ENCODE measurements at regions of chr5 and their contacts with region 1.

Region 1: GRCh38 chr5:68287976-68288706 is 72.6 kb downstream of the PIK3R1 start:
- DNase-seq: peak; percentile 19 to 81 (median 34)
- ATAC-seq: peak; percentile 73
- H3K4me3 ChIP-seq: peak overlapping the region; percentile 65
- H3K4me3 Mint-ChIP-seq: peak overlapping the region; percentile 94
- H3K27ac ChIP-seq: peak overlapping the region; percentile 45 to 52
- H3K27ac Mint-ChIP-seq: peak overlapping the region; percentile 91
- H3K4me1 ChIP-seq: peaks cover 46% of the 10 kb centered on the region
- H3K4me1 Mint-ChIP-seq: peaks cover 93% of the 10 kb centered on the region
- H3K27me3 ChIP-seq: no peaks in the 10 kb centered on the region
- H3K27me3 Mint-ChIP-seq: no peaks in the 10 kb centered on the region
- CTCF ChIP-seq: no peak

Region 2: DNA sequence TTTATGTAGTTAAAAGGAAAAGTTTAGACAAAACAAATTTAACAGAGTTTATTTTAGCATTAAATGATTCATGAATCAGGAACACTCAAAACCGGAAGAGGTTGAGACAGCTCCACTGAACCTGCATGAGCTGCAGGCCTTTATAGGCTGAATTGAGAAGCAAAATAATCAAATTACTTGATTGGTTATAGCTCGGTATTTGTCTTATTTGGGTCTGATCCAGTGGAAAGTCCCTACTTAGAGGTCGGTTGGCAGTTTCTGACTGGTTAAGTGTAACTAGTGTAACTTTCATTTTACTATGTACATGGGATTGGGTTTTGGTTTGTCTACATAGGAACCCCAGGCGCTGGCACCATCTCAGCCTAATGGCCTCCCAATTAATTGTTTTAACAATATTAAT is 146.6 kb before region 1 on chr5:
- CTCF ChIA-PET with region 1: no interaction called
- POLR2A ChIA-PET with region 1: no interaction called
- intact Hi-C with region 1: no loop called
- DNase-seq: peak in 3 of 14 experiments; percentile 44 to 64 (median 46)
- ATAC-seq: peak; percentile 61
- H3K4me3 ChIP-seq: no peak overlapping the region
- H3K4me3 Mint-ChIP-seq: no peak overlapping the region
- H3K27ac ChIP-seq: no peak overlapping the region
- H3K27ac Mint-ChIP-seq: no peak overlapping the region
- H3K4me1 ChIP-seq: no peaks in the 10 kb centered on the region
- H3K4me1 Mint-ChIP-seq: peaks cover 4% of the 10 kb centered on the region
- H3K27me3 ChIP-seq: no peaks in the 10 kb centered on the region
- H3K27me3 Mint-ChIP-seq: peaks cover 4% of the 10 kb centered on the region
- CTCF ChIP-seq: no peak

Region 3: DNA sequence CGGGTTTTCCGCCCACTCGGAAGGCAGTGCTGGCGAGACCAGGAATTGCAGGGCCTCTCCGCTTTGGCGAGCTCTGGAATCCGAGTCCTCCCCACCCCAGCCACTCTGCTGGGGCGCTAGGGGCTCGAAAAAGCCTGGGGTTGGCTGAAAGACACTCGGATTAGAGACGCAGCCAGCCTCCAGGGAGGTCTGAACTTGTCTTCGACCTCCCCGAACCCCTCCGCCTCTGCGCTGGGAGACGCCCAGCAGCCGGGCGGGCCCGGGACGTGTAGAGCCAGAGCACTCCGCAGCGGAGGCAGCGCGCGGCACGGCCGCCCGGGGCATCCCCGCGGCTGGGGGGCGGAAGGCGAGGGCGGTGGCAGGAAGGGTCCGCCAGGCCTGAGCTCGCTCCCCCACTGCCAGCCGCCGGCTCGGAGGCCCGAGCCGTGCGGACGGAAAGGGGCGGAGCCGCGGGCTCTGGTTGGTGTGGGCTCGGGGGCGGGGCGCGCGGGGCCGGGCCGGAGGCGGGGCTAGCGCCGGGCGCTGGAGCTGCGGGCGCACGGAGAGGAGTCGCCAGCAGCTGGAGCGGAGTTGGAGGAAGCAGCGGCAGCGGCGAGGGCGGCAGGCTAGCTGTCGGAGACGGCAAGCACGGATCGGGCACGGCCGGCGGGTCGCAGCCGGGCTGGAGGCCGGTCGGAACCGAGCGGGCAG is 72.8 kb before region 1 on chr5 and contains the start of gene PIK3R1:
- CTCF ChIA-PET with region 1: interaction called, 4 read pairs
- POLR2A ChIA-PET with region 1: interaction called, 18 read pairs
- intact Hi-C with region 1: loop called in 1 of 2 experiments (anchors 5 kb)
- DNase-seq: peak; percentile 78 to 97 (median 90)
- ATAC-seq: peak; percentile 75
- H3K4me3 ChIP-seq: peak within 1 kb of the TSS; percentile 78
- H3K4me3 Mint-ChIP-seq: peak within 1 kb of the TSS; percentile 97
- H3K27ac ChIP-seq: peak within 1 kb of the TSS; percentile 91 to 93
- H3K27ac Mint-ChIP-seq: peak within 1 kb of the TSS; percentile 96
- H3K4me1 ChIP-seq: peaks cover 10% of the 10 kb centered on the region
- H3K4me1 Mint-ChIP-seq: peaks cover 47% of the 10 kb centered on the region
- H3K27me3 ChIP-seq: no peaks in the 10 kb centered on the region
- H3K27me3 Mint-ChIP-seq: no peaks in the 10 kb centered on the region
- CTCF ChIP-seq: peak; percentile 22
- total RNA-seq, gene PIK3R1: 455 to 459 TPM

Region 4: GRCh38 chr5:68272289-68272688 is 15.9 kb before region 1 on chr5:
- CTCF ChIA-PET with region 1: interaction called, 14 read pairs
- POLR2A ChIA-PET with region 1: interaction called, 4 read pairs
- intact Hi-C with region 1: no loop called
- DNase-seq: peak in 3 of 14 experiments; percentile 52 to 56 (median 54)
- ATAC-seq: no peak
- H3K4me3 ChIP-seq: no peak overlapping the region
- H3K4me3 Mint-ChIP-seq: no peak overlapping the region
- H3K27ac ChIP-seq: no peak overlapping the region
- H3K27ac Mint-ChIP-seq: peak overlapping the region; percentile 69
- H3K4me1 ChIP-seq: peaks cover 45% of the 10 kb centered on the region
- H3K4me1 Mint-ChIP-seq: peaks cover 96% of the 10 kb centered on the region
- H3K27me3 ChIP-seq: no peaks in the 10 kb centered on the region
- H3K27me3 Mint-ChIP-seq: no peaks in the 10 kb centered on the region
- CTCF ChIP-seq: peak; percentile 72

Region 5: DNA sequence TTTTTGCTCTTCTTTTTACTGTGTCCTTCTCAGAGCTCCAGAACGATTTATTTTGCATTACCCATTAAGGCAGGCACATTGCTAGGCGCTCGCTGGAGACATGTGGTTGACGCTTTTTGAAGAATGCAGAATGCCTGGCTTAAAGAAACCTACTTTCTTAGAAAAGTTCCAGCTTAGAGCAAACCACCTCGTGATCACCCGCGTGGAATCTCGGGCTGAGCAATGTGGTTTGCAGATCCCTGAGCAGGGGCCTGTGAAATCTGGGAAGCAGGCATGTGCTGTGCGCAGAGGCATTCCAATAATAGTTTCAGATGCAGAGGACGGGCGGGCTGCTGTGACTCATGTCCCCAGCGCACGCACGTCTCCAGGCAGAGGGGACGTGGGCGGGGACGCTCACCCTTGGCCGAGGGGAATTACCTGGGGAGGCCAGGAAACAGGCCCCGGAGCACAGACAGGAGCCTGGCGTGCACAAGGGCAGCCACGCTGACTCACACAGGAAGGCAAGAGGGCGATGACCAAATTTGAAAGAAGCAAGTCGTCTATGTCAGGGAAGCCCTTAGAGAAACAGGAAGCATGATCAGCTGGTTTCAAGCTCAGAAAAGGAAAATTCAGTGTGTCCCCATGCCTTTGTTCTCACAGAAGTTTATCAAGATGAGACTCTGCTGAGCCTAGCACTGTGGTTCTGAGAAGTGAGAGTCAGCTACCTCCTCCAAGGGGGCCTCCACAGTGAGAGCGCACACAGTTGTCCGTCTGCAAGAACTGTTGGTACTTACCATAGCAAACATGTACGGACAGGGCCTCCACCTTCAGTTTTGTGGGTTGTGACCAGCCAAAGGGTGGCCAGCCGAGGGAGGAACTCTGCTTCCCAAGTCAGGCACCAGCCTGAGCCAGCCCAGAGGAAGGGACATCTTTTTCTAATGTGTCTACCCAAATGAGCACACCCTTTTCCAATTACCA is 146.1 kb after region 1 on chr5:
- CTCF ChIA-PET with region 1: interaction called, 5 read pairs
- POLR2A ChIA-PET with region 1: interaction called, 9 read pairs
- intact Hi-C with region 1: loop called in 1 of 2 experiments (anchors 1 kb)
- DNase-seq: peak; percentile 55 to 96 (median 84)
- ATAC-seq: peak; percentile 95
- H3K4me3 ChIP-seq: peak overlapping the region; percentile 24
- H3K4me3 Mint-ChIP-seq: peak overlapping the region; percentile 40
- H3K27ac ChIP-seq: peak overlapping the region; percentile 31 to 68
- H3K27ac Mint-ChIP-seq: peak overlapping the region; percentile 67
- H3K4me1 ChIP-seq: peaks cover 35% of the 10 kb centered on the region
- H3K4me1 Mint-ChIP-seq: peaks cover 35% of the 10 kb centered on the region
- H3K27me3 ChIP-seq: no peaks in the 10 kb centered on the region
- H3K27me3 Mint-ChIP-seq: no peaks in the 10 kb centered on the region
- CTCF ChIP-seq: no peak

Region 6: DNA sequence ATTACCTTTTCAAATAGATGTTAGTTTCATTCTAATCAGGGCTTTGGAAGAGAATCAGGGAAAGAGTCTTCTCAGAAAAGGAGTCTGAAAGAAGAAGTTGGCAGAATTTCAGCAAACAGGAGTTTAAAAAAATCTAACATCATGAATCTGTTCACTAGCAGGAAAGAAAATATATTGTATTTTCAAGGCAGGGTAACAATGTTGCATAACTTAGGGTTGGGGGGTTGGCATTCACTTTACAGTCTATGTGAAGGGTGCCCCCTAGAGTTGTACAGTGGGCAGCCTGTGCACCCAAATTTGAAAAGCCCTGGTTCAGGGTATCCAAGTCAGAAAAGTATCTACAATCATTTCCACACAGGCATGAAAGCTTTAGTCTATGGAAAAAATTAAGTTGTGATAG is 457.3 kb after region 1 on chr5:
- CTCF ChIA-PET with region 1: no interaction called
- POLR2A ChIA-PET with region 1: no interaction called
- intact Hi-C with region 1: loop called in 1 of 2 experiments (anchors 10 kb)
- DNase-seq: peak in 1 of 14 experiments; percentile 21
- ATAC-seq: no peak
- H3K4me3 ChIP-seq: no peak overlapping the region
- H3K4me3 Mint-ChIP-seq: no peak overlapping the region
- H3K27ac ChIP-seq: no peak overlapping the region
- H3K27ac Mint-ChIP-seq: no peak overlapping the region
- H3K4me1 ChIP-seq: no peaks in the 10 kb centered on the region
- H3K4me1 Mint-ChIP-seq: peaks cover 4% of the 10 kb centered on the region
- H3K27me3 ChIP-seq: no peaks in the 10 kb centered on the region
- H3K27me3 Mint-ChIP-seq: peaks cover 6% of the 10 kb centered on the region
- CTCF ChIP-seq: no peak

Region 7: GRCh38 chr5:69007726-69008368 is 719.7 kb after region 1 on chr5:
- CTCF ChIA-PET with region 1: no interaction called
- POLR2A ChIA-PET with region 1: no interaction called
- intact Hi-C with region 1: loop called (anchors 1 kb)
- DNase-seq: peak; percentile 51 to 75 (median 62)
- ATAC-seq: peak; percentile 88
- H3K4me3 ChIP-seq: no peak overlapping the region
- H3K4me3 Mint-ChIP-seq: no peak overlapping the region
- H3K27ac ChIP-seq: no peak overlapping the region
- H3K27ac Mint-ChIP-seq: no peak overlapping the region
- H3K4me1 ChIP-seq: no peaks in the 10 kb centered on the region
- H3K4me1 Mint-ChIP-seq: no peaks in the 10 kb centered on the region
- H3K27me3 ChIP-seq: no peaks in the 10 kb centered on the region
- H3K27me3 Mint-ChIP-seq: peaks cover 23% of the 10 kb centered on the region
- CTCF ChIP-seq: peak; percentile 83

Measured in CD4-positive, alpha-beta T cell (primary cell).